Testis (tissue), 5 donors: ENCODE measurements at regions of chr17 and their contacts with region 1.

Region 1: DNA sequence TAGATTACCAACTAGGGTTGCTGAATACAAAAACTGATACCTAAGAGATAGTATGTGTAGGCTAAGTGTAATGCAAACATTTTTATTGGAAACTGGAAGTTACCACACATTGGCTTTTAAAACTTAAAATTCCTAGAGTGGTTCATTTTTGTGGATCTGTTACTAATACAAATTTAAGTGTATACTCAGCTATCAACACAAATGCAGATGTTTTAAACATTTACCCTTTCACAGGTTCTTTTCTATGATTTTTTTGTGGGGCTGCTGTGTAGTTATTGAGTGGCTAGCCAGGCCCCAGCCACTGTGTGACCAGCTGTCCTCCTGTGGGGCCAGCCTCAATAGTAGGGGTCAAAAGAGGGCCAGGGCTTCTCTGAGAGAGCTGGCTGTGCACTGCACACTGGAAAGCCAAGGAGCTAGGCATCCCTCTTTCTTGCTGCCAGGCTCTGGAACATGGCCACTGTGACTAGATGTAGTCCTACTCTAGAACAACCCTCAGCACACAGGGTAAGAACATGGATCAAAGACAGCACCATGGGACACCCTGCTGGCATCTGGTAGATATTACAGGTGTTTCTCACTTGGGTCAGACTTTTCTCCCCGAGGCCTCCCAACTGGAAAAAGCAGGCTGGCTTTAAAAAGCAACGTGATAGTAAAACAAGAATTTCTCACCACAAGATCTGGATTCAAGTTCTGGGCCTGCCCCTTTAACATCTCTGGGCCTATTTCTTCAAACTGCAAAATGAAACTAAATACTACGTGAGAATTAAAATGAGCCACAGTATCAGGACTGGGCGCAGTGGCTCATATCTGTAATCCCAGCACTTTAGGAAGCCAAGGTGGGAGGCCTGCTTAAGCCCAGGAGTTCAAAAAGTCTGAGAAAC is 7.3 kb upstream of the VEZF1 start:
- DNase-seq: peak; percentile 68
- H3K4me3 ChIP-seq: no peak overlapping the region
- H3K27ac ChIP-seq: peak overlapping the region in 1 of 2 donors; percentile 4
- H3K4me1 ChIP-seq: peaks cover 9% of the 10 kb centered on the region
- H3K27me3 ChIP-seq: no peaks in the 10 kb centered on the region
- CTCF ChIP-seq: peak; percentile 56 to 68 (median 65)
- POLR2A ChIP-seq: no peak

Region 2: DNA sequence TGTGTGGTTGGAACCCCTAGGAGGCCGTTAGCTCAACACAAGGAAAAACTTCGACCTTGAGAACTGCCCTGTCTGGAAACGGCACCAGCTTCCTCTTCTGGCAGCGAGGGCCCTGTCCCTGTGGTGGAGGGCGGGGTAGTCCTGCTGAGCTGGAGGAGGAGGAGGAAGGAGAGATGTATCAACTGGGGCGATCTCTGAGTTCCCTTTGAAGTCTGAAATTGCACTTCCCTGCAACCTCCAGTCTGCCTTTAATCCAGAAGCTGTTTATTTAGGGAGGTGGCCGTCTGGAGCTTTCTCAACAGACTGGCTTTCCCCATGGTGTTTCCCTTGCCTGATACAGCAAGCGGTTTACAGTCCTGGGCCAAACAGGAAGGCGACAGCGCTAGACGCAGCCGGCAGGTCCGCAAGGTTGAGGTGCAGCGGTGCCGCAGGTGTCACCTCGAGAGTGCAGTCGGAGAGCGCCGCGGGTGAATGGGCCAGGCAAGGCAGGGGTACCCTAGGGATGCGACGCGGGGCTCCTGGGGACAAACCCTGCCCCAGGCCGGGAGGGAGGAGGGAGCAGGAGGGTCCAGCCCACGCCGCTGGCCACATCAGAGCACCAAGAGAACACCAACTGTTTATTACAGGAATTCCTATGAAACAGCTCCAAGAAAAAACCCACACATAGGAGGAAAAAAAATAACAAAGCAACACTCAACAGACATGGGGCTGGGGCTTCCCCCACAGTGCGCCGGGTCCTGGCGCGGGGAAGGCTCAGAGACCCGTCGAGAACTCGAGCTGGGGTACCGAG is 134.1 kb before region 1 on chr17:
- intact Hi-C with region 1: loop called (anchors 5 kb)
- DNase-seq: peak; percentile 72
- H3K4me3 ChIP-seq: peak overlapping the region; percentile 52 to 78
- H3K27ac ChIP-seq: peak overlapping the region; percentile 73 to 79
- H3K4me1 ChIP-seq: peaks cover 17% of the 10 kb centered on the region
- H3K27me3 ChIP-seq: no peaks in the 10 kb centered on the region
- CTCF ChIP-seq: no peak
- POLR2A ChIP-seq: no peak